CD8-positive, alpha-beta T cell (primary cell): ENCODE measurements at regions of chr5 and their contacts with region 1.

Region 1: GRCh38 chr5:131109540-131110255 is 55.4 kb downstream of the HINT1 start:
- DNase-seq: peak in 5 of 9 experiments; percentile 13 to 61 (median 24)
- ATAC-seq: peak; percentile 80
- H3K4me3 ChIP-seq: no peak overlapping the region
- H3K4me3 Mint-ChIP-seq: no peak overlapping the region
- H3K27ac ChIP-seq: no peak overlapping the region
- H3K27ac Mint-ChIP-seq: no peak overlapping the region
- H3K4me1 ChIP-seq: peaks cover 3% of the 10 kb centered on the region
- H3K4me1 Mint-ChIP-seq: peaks cover 4% of the 10 kb centered on the region
- H3K27me3 ChIP-seq: no peaks in the 10 kb centered on the region
- H3K27me3 Mint-ChIP-seq: no peaks in the 10 kb centered on the region
- CTCF ChIP-seq: peak; percentile 96

Region 2: GRCh38 chr5:129767906-129768380 is 1341.8 kb before region 1 on chr5:
- CTCF ChIA-PET with region 1: interaction called, 5 read pairs
- POLR2A ChIA-PET with region 1: no interaction called
- intact Hi-C with region 1: loop called in 1 of 2 experiments (anchors 1 kb)
- DNase-seq: peak in 8 of 9 experiments; percentile 1 to 75 (median 42)
- ATAC-seq: peak; percentile 64
- H3K4me3 ChIP-seq: no peak overlapping the region
- H3K4me3 Mint-ChIP-seq: no peak overlapping the region
- H3K27ac ChIP-seq: no peak overlapping the region
- H3K27ac Mint-ChIP-seq: no peak overlapping the region
- H3K4me1 ChIP-seq: no peaks in the 10 kb centered on the region
- H3K4me1 Mint-ChIP-seq: peaks cover 2% of the 10 kb centered on the region
- H3K27me3 ChIP-seq: no peaks in the 10 kb centered on the region
- H3K27me3 Mint-ChIP-seq: peaks cover 6% of the 10 kb centered on the region
- CTCF ChIP-seq: peak; percentile 90

Region 3: DNA sequence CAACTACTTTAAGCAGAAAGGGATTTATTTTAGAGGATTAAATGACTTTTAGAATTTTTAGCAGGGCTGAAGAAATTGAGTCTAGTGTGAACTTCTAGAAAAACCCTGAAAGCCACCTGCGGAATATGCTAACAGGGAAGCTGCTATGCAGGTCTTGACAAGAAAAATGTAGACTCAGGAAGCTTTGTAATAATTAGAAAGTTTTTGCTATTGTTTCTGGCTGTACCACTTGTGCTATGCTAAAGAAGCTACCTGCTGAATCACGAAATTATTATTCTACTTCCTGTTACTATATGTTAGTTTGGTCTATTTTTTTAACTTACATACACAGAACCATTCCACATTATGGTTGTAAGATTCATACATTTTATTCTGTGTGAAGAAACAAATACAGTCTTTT is 1279.4 kb before region 1 on chr5:
- CTCF ChIA-PET with region 1: no interaction called
- POLR2A ChIA-PET with region 1: no interaction called
- intact Hi-C with region 1: no loop called
- DNase-seq: no peak
- ATAC-seq: no peak
- H3K4me3 ChIP-seq: no peak overlapping the region
- H3K4me3 Mint-ChIP-seq: no peak overlapping the region
- H3K27ac ChIP-seq: no peak overlapping the region
- H3K27ac Mint-ChIP-seq: no peak overlapping the region
- H3K4me1 ChIP-seq: no peaks in the 10 kb centered on the region
- H3K4me1 Mint-ChIP-seq: no peaks in the 10 kb centered on the region
- H3K27me3 ChIP-seq: no peaks in the 10 kb centered on the region
- H3K27me3 Mint-ChIP-seq: peaks cover 7% of the 10 kb centered on the region
- CTCF ChIP-seq: no peak

Region 4: DNA sequence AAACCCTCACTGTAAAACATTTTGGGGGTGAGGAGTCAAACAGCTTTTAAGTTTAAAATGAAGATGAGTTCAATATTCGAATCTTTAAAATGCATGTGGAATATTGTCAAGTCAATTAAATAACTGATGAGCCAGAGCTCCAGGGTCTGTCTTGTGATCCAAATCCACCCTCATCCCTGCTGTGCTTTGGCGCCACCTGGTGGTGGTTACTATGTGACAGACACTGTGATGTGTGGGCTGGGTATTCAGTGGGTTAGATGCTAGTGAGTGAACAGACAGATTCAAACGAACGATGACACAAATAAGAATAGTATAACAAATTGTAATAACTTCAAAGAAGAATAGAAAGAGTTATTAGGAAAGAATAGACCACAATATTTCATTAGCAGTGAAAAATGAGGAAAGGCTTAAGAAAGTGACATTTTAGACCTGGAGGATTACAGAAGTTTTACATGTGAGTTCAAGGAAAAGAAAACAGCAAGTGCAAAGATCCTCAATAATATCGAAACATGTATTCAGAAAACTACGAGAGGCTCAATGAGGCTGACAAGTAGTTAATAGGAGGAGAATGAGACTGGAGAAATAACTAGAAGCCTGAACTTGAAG is 1256.8 kb before region 1 on chr5:
- CTCF ChIA-PET with region 1: no interaction called
- POLR2A ChIA-PET with region 1: no interaction called
- intact Hi-C with region 1: loop called in 1 of 2 experiments (anchors 10 kb)
- DNase-seq: peak; percentile 27 to 73 (median 61)
- ATAC-seq: peak; percentile 48
- H3K4me3 ChIP-seq: no peak overlapping the region
- H3K4me3 Mint-ChIP-seq: no peak overlapping the region
- H3K27ac ChIP-seq: no peak overlapping the region
- H3K27ac Mint-ChIP-seq: no peak overlapping the region
- H3K4me1 ChIP-seq: no peaks in the 10 kb centered on the region
- H3K4me1 Mint-ChIP-seq: no peaks in the 10 kb centered on the region
- H3K27me3 ChIP-seq: no peaks in the 10 kb centered on the region
- H3K27me3 Mint-ChIP-seq: peaks cover 8% of the 10 kb centered on the region
- CTCF ChIP-seq: peak; percentile 95

Region 5: DNA sequence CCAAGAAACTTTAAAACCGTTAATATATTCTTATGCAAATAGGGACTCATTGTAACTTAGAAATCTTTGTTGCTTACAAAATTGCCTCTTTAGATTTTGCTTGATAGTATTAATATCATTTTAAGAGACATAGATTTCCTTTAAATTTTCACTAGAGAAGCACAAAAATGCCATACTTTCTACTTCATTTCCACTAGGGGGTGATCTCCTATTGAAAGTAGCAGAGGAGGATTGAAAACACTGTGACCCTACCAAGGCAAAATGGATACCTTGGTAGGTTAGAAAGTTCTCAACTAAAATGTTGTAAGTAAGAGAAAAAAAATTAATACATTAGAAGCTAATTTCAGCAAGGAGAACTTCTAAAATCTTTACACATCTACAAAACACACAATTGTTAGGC is 1000.5 kb before region 1 on chr5:
- CTCF ChIA-PET with region 1: no interaction called
- POLR2A ChIA-PET with region 1: no interaction called
- intact Hi-C with region 1: loop called (anchors 2 kb)
- DNase-seq: peak in 2 of 9 experiments; percentile 15 to 26
- ATAC-seq: no peak
- H3K4me3 ChIP-seq: no peak overlapping the region
- H3K4me3 Mint-ChIP-seq: no peak overlapping the region
- H3K27ac ChIP-seq: no peak overlapping the region
- H3K27ac Mint-ChIP-seq: no peak overlapping the region
- H3K4me1 ChIP-seq: no peaks in the 10 kb centered on the region
- H3K4me1 Mint-ChIP-seq: no peaks in the 10 kb centered on the region
- H3K27me3 ChIP-seq: no peaks in the 10 kb centered on the region
- H3K27me3 Mint-ChIP-seq: no peaks in the 10 kb centered on the region
- CTCF ChIP-seq: no peak

Region 6: GRCh38 chr5:130871346-130872086 is 238.2 kb before region 1 on chr5:
- CTCF ChIA-PET with region 1: interaction called, 56 read pairs
- POLR2A ChIA-PET with region 1: interaction called, 3 read pairs
- intact Hi-C with region 1: loop called (anchors 1 kb)
- DNase-seq: peak; percentile 2 to 66 (median 28)
- ATAC-seq: peak; percentile 59
- H3K4me3 ChIP-seq: no peak overlapping the region
- H3K4me3 Mint-ChIP-seq: no peak overlapping the region
- H3K27ac ChIP-seq: no peak overlapping the region
- H3K27ac Mint-ChIP-seq: no peak overlapping the region
- H3K4me1 ChIP-seq: no peaks in the 10 kb centered on the region
- H3K4me1 Mint-ChIP-seq: no peaks in the 10 kb centered on the region
- H3K27me3 ChIP-seq: peaks cover 0 to 3% of the 10 kb centered on the region in 2 experiments
- H3K27me3 Mint-ChIP-seq: no peaks in the 10 kb centered on the region
- CTCF ChIP-seq: peak; percentile 66

Region 7: GRCh38 chr5:131068893-131069643 is 40.6 kb before region 1 on chr5:
- CTCF ChIA-PET with region 1: interaction called, 15 read pairs
- POLR2A ChIA-PET with region 1: no interaction called
- intact Hi-C with region 1: loop called in 1 of 2 experiments (anchors 2 kb)
- DNase-seq: peak; percentile 12 to 82 (median 59)
- ATAC-seq: peak; percentile 98
- H3K4me3 ChIP-seq: peak overlapping the region in 1 of 2 experiments; percentile 5
- H3K4me3 Mint-ChIP-seq: peak overlapping the region; percentile 40
- H3K27ac ChIP-seq: peak overlapping the region; percentile 12 to 73
- H3K27ac Mint-ChIP-seq: peak overlapping the region; percentile 87
- H3K4me1 ChIP-seq: peaks cover 22% of the 10 kb centered on the region
- H3K4me1 Mint-ChIP-seq: peaks cover 54% of the 10 kb centered on the region
- H3K27me3 ChIP-seq: no peaks in the 10 kb centered on the region
- H3K27me3 Mint-ChIP-seq: no peaks in the 10 kb centered on the region
- CTCF ChIP-seq: peak; percentile 32